Sciatic nerve (tissue), 2 donors: ENCODE measurements at regions of chr1 and their contacts with region 1.

Region 1: GRCh38 chr1:25997828-25998761 is at the start of gene PAFAH2:
- DNase-seq: peak; percentile 98
- ATAC-seq: peak; percentile 99
- total RNA-seq, gene PAFAH2: 11.5 TPM

Region 2: GRCh38 chr1:25904943-25905679 is 93.0 kb before region 1 on chr1:
- intact Hi-C with region 1: loop called (anchors 5 kb)
- DNase-seq: peak; percentile 98
- ATAC-seq: peak; percentile 96